Heart left ventricle (tissue), 16 donors: ENCODE measurements at regions of chr14 and their contacts with region 1.

Region 1: GRCh38 chr14:75709207-75709812 is 48.3 kb downstream of the TTLL5 start:
- DNase-seq: peak; percentile 60 to 75 (median 69)
- ATAC-seq: peak in 3 of 4 donors; percentile 67 to 73 (median 67)
- H3K4me3 ChIP-seq: no peak overlapping the region
- H3K27ac ChIP-seq: no peak overlapping the region
- H3K4me1 ChIP-seq: peaks cover 0 to 27% (median 13%) of the 10 kb centered on the region in 12 donors
- H3K27me3 ChIP-seq: no peaks in the 10 kb centered on the region
- CTCF ChIP-seq: peak; percentile 71 to 89 (median 78)
- POLR2A ChIP-seq: no peak

Region 2: DNA sequence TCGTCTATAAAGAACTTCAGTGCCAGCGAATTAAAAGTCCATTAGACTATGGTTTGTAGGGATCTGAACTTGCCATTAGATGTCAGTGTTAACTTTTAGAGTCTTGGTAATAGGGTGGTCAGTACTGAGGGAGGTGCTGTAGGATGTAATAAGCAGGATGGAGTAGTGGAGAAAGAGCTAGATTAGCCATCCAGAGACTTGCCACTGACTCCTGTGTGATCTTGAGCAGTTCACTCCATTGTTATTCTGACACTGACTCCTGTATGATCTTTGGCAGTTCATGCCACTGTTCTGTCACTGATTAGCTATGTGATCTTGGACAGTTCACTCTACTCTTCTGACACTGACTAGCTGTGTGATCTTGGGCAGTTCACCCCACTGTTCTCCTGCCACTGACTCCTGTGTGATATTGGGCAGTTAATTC is 85.3 kb after region 1 on chr14:
- intact Hi-C with region 1: loop called (anchors 1 to 5 kb)
- DNase-seq: no peak
- ATAC-seq: peak; percentile 92 to 99 (median 98)
- H3K4me3 ChIP-seq: no peak overlapping the region
- H3K27ac ChIP-seq: peak overlapping the region in 3 of 12 donors; percentile 15 to 54 (median 26)
- H3K4me1 ChIP-seq: peaks cover 0 to 11% (median 5%) of the 10 kb centered on the region in 12 donors
- H3K27me3 ChIP-seq: no peaks in the 10 kb centered on the region
- CTCF ChIP-seq: peak; percentile 17 to 71 (median 53)
- POLR2A ChIP-seq: no peak

Region 3: DNA sequence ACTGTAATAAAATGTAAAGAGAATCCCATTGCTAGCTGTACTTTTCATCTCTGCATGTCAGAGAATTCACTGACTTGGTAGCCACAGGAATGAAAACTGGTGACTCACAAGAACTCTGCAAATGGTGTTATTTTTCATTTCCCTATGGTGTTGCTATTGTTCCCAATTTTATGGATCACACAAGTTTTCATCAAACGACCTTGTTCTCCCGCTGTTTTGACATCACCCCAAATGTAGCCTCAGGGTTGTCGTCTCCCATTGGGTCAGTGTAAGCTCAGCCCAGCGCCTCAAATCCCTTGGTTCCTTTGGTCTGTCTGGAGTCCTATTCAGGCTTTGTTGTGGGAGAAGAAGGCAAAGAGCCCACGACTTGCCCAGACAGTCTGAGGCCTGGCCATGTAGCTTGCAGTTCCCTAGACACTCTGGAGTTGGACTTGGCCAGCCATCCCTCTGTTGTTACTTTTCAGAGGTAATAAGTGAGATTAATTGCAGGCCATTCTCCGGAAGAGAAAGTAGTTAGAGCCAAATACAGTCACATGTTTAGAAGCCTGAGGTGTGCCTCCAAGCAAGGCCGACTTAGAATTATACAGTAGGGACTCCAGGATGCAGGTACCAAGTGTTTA is 113.3 kb after region 1 on chr14:
- intact Hi-C with region 1: no loop called
- DNase-seq: peak in 2 of 5 donors; percentile 26 to 34
- ATAC-seq: peak; percentile 11 to 71 (median 47)
- H3K4me3 ChIP-seq: no peak overlapping the region
- H3K27ac ChIP-seq: peak overlapping the region in 8 of 12 donors; percentile 46 to 79 (median 74)
- H3K4me1 ChIP-seq: peaks cover 0 to 52% (median 34%) of the 10 kb centered on the region in 12 donors
- H3K27me3 ChIP-seq: no peaks in the 10 kb centered on the region
- CTCF ChIP-seq: no peak
- POLR2A ChIP-seq: no peak

Region 4: DNA sequence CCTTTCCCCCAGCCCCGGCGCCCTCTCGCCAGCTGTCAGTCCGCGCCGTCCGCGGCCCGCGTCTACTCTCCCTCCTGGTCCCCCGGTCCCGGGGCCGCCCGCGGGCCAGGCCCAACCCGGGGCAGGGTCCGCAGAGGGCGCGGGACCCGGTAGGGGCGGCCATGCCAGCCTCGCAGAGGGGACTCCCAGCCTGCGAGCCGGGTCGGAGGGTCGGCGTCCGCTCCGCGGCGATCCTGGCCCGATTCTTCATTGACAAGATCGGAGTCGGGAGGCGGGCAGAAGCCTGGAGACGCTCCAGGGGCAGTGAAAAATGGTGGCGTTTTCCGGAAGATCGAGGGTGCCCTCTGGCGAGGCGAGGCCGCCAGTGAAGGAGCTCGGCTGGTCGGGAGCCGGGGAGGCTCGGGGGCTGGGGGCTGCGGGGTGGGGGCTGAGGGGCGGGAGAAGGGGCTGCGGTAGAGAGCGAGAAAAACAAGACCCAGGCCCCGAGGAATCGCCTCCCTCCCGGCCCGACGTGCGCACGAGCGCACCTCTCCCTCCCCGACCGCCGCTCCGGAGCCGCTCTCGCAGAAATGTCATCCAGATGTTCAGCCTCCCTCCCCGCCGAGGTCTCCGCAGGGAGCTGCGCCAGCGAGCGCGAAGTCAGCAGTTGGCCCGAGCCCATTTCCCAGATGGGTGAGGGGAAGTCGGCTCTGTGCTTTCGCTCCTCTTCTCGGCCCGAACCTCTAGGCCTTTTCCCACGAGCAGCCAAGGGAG is 273.1 kb after region 1 on chr14:
- intact Hi-C with region 1: loop called (anchors 1 to 5 kb)
- DNase-seq: peak; percentile 85 to 89 (median 87)
- ATAC-seq: peak; percentile 21 to 78 (median 62)
- H3K4me3 ChIP-seq: peak overlapping the region; percentile 56 to 88 (median 78)
- H3K27ac ChIP-seq: peak overlapping the region; percentile 83 to 99 (median 96)
- H3K4me1 ChIP-seq: peaks cover 3 to 65% (median 33%) of the 10 kb centered on the region in 12 donors
- H3K27me3 ChIP-seq: no peaks in the 10 kb centered on the region
- CTCF ChIP-seq: peak; percentile 50 to 87 (median 70)
- POLR2A ChIP-seq: no peak

Region 5: DNA sequence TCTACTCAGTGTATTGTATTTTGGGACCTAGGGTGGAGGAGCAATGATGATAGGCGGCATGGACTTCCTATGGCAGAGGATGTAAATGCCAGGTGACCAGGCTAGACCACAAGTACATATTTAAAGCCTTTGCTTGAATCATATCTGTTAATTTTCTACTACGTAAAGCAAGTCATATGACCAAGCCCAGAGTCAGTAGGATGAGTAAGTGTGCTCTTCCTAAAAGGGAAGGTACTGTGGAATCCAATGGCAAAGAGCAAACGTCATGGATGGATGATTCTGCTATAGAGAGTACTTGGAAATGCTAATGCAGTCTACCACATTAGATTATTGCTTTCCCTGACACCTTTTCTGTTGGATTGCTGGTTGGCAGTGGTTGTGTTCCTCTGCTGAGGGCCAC is 459.2 kb after region 1 on chr14:
- intact Hi-C with region 1: loop called in 1 of 10 experiments (anchors 10 kb)
- DNase-seq: no peak
- ATAC-seq: no peak
- H3K4me3 ChIP-seq: no peak overlapping the region
- H3K27ac ChIP-seq: no peak overlapping the region
- H3K4me1 ChIP-seq: peaks cover 0 to 14% (median 4%) of the 10 kb centered on the region in 12 donors
- H3K27me3 ChIP-seq: no peaks in the 10 kb centered on the region
- CTCF ChIP-seq: no peak
- POLR2A ChIP-seq: no peak

Region 6: GRCh38 chr14:76386915-76387782 is 677.8 kb after region 1 on chr14:
- intact Hi-C with region 1: loop called in 2 of 10 experiments (anchors 5 to 10 kb)
- DNase-seq: peak; percentile 57 to 81 (median 65)
- ATAC-seq: peak; percentile 61 to 90 (median 86)
- H3K4me3 ChIP-seq: no peak overlapping the region
- H3K27ac ChIP-seq: no peak overlapping the region
- H3K4me1 ChIP-seq: peaks cover 0 to 4% (median 0%) of the 10 kb centered on the region in 12 donors
- H3K27me3 ChIP-seq: peaks cover 0 to 26% (median 0%) of the 10 kb centered on the region in 9 donors
- CTCF ChIP-seq: peak; percentile 84 to 98 (median 96)
- POLR2A ChIP-seq: no peak